Dorsolateral prefrontal cortex (tissue), 120 donors: ENCODE measurements at regions of chr17 and their contacts with region 1.

Region 1: DNA sequence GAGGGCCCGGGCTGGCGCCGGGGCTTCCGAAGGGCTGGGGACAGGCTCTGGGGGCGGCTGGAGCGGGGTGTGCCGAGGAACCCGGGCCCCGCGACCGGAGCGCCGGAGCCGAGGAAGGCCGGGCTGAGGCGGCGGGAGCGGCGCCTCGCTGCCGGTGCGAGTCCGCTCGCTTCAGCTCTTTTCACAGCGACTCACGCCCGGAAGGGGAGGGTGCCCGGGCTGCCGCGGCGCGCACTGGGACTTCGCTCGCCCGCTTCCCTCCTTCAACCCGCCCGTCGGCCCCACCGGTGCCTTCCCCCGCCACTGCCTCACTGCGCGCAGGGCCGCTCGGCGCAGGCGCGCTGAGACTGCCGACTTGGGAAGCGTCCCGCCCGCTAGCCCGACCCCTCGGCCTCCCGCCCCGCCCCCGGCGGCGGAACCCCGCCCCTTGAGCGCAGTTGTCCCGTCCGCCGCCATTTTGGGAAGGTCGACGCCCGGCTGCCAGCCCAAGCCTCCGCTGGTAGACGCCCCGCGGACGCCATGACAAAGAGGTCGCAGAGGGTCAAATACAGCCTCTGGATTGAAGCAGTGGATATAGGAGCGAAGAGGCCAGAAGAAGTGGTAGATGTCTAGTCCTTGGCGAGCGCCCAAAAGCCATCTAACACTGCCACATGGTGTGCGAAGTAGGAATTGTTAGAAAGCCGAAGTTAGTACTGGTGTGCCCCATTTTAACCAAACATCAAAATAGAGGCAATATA is at the start of gene UBE2G1:
- DNase-seq: peak; percentile 94 to 99 (median 97)
- H3K4me3 ChIP-seq: peak within 1 kb of the TSS; percentile 67 to 100 (median 94)
- H3K27ac ChIP-seq: peak within 1 kb of the TSS; percentile 86 to 99 (median 96)
- H3K27me3 ChIP-seq: no peaks in the 10 kb centered on the region
- CTCF ChIP-seq: peak in 45 of 56 donors; percentile 13 to 63 (median 38)
- total RNA-seq, gene UBE2G1: 43.4 to 73.4 (median 57.3) TPM

Region 2: DNA sequence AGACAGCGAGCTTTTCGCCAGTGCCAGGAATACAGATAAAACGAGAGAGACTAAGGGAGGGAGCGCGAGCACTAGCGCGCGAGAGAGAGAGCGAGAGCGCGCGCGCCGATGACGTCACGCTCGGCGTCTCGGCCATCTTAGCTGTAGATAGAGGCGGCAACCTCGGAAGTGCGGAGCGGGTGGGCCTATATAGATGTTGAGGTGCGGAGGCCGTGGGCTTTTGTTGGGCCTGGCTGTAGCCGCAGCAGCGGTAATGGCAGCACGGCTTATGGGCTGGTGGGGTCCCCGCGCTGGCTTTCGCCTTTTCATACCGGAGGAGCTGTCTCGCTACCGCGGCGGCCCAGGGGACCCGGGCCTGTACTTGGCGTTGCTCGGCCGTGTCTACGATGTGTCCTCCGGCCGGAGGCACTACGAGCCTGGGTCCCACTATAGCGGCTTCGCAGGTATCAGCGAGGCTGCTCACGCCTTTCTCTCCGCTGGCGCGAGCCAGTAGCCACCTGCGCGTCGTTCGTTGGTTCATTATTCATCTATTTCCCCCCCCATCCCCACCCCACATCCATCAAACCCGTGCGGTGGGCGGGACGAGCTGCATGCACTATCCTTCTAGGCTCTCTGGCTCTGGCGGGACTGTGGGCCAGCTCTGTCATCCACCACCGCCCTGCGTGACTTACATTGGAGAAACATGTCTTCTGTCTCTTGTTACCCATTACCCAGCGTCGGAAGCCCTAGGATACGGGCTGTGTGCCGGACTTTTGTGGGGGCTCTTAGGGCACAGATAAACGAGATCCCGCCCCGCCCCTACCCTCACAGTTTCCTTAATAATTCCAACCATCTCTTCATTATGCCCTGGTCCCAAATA is 222.7 kb before region 1 on chr17:
- intact Hi-C with region 1: loop called in 1 of 2 experiments (anchors 10 kb)
- DNase-seq: peak; percentile 86 to 93 (median 91)
- H3K4me3 ChIP-seq: peak overlapping the region; percentile 80 to 100 (median 97)
- H3K27ac ChIP-seq: peak overlapping the region; percentile 91 to 100 (median 99)
- H3K27me3 ChIP-seq: no peaks in the 10 kb centered on the region
- CTCF ChIP-seq: peak in 3 of 56 donors; percentile 5 to 19 (median 9)

Region 3: GRCh38 chr17:4263282-4264215 is 102.9 kb before region 1 on chr17 and contains the start of gene ANKFY1:
- intact Hi-C with region 1: loop called (anchors 5 kb)
- DNase-seq: peak; percentile 91 to 97 (median 96)
- H3K4me3 ChIP-seq: peak within 1 kb of the TSS; percentile 63 to 99 (median 88)
- H3K27ac ChIP-seq: peak within 1 kb of the TSS in 58 of 59 donors; percentile 1 to 95 (median 82)
- H3K27me3 ChIP-seq: no peaks in the 10 kb centered on the region
- CTCF ChIP-seq: peak in 49 of 56 donors; percentile 5 to 62 (median 37)
- total RNA-seq, gene ANKFY1: 46.8 to 109 (median 81.7) TPM

Region 4: DNA sequence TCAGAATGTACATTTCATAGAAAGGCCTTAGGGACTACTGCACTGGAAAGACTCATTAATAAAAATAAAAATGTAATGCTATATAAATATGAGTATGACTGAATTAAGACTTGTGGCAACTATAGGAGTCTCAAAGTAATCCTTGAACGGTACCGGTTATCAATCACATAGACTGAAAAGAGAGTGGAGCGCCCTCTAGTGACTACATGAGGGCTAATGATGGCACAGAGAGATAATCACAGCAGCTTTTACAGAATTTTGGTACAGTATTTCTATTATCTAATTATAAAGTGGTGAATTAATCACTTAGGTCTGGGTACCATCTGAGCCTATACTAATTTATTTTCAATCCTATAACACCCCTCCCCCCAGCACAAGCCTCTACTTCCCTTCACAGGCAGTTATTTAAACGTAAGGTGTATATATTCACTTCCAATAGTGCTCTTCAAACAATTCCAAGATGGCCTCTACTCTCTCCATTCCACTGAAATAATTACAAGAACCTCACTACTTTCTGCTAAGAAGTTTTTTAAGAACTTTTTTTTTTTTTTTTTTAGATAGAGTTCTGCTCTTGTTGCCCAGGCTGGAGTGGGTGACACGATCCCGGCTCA is 62.0 kb before region 1 on chr17:
- intact Hi-C with region 1: loop called in 1 of 2 experiments (anchors 5 kb)
- DNase-seq: peak in 3 of 10 donors; percentile 37 to 71 (median 50)
- H3K4me3 ChIP-seq: no peak overlapping the region
- H3K27ac ChIP-seq: peak overlapping the region in 27 of 59 donors; percentile 2 to 69 (median 27)
- H3K27me3 ChIP-seq: no peaks in the 10 kb centered on the region
- CTCF ChIP-seq: peak; percentile 50 to 91 (median 72)

Region 5: DNA sequence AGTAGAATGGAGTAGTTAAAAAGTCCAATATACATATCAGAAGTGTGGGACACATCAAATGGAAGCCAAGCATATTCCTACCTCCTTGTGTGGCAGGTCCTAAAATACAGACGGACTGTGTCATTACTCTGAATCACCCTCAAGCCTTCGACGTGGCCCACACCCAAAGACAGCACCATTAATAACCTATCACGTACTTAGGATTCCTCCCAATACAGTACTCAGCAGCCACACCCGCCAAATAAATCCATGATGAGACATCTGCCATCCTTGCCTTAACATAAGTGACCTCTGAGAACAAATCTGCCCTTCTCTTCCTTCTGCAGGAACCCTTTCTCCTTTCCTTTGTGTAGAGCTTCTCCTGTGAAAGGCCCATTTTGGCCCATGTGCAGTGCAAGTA is 38.9 kb before region 1 on chr17:
- intact Hi-C with region 1: no loop called
- DNase-seq: no peak
- H3K4me3 ChIP-seq: no peak overlapping the region
- H3K27ac ChIP-seq: no peak overlapping the region
- H3K27me3 ChIP-seq: no peaks in the 10 kb centered on the region
- CTCF ChIP-seq: no peak

Region 6: DNA sequence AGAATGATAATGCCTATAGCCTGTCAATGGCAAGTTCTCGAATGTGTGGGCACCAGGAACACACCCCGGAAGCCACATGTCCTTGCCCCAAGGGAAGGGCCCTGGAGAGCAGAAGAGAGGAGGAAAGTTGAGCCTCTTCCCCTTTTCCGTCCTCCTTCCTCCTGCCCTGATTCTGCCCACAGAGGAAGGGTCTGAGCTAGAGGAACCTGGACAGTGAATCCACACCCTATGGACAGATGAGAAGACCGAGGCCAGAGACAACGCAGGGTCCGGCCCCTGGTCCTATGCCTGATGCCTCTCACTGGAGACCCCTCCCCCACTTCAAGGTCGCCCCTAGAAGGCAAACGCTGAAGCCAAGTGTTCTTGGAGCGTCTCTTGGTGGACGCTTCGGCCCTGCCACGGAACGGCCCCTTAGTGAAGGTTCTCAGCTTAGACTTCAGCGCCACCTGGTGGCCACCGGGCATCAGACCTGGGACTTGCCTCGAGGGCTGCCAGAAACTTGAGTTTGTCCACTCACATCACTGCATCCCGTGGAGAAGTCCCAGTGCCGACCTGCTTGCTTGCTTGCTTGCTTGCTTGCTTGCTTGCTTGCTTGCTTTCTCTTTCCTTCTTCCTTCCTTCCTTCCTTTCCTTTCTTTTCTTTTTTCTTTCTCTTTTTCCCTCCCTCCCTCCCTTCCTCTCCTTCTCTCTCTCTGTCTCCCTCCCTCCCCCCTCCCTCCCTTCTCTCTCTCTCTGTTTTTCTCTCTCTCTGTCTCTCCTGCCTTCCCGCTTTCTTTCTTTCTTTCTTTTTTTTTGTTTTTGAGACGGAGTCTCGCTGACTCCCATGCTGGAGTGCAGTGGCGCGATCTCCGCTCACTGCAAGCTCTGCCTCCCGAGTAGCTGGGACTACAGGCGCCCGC is 46.7 kb after region 1 on chr17:
- intact Hi-C with region 1: loop called in 1 of 2 experiments (anchors 5 kb)
- DNase-seq: peak; percentile 87 to 95 (median 92)
- H3K4me3 ChIP-seq: peak overlapping the region in 12 of 59 donors; percentile 1 to 39 (median 22)
- H3K27ac ChIP-seq: peak overlapping the region in 2 of 59 donors; percentile 11 to 18
- H3K27me3 ChIP-seq: no peaks in the 10 kb centered on the region
- CTCF ChIP-seq: peak; percentile 65 to 98 (median 94)